ENCODE measurements at regions of chr14 and their contacts with region 1.

Region 1: GRCh38 chr14:77707724-77708408 is at the starts of genes ALKBH1 and SLIRP:
- DNase-seq: peak; percentile 85
- H3K4me3 ChIP-seq: peak within 1 kb of the TSS; percentile 44 to 98 (median 98)
- H3K27ac ChIP-seq: peak within 1 kb of the TSS; percentile 19
- H3K4me1 ChIP-seq: peaks cover 21% of the 10 kb centered on the region
- H3K27me3 ChIP-seq: no peaks in the 10 kb centered on the region
- CTCF ChIP-seq: no peak
- POLR2A ChIP-seq: peak; percentile 94
- total RNA-seq, gene ALKBH1: 13.1 and 14.8 TPM in 2 replicates
- total RNA-seq, gene SLIRP: 160 and 177 TPM in 2 replicates

Region 2: DNA sequence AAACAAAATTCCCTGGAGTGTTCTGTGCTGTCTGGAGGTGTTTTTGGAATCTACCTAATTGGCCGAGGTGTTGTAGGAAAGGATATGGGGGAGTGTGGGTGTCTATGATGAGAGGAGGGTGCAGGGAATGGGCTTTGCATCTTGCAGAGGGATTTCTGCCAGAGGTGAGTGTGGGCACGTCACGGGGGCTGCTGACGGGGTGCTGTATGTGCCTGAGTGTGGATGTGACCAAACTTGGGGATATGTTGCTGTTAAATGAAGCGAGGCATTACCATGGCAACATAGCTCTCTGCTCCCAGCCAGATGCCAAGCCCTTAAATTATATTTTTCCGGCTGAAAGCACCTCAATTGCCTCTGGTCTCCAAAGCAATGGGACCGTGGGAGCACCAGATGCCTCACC is 47.1 kb before region 1 on chr14:
- CTCF ChIA-PET with region 1: no interaction called
- POLR2A ChIA-PET with region 1: no interaction called
- dilution Hi-C with region 1: no loop called
- intact Hi-C with region 1: loop called (anchors 1 kb)
- DNase-seq: no peak
- H3K4me3 ChIP-seq: no peak overlapping the region
- H3K27ac ChIP-seq: no peak overlapping the region
- H3K4me1 ChIP-seq: peaks cover 12% of the 10 kb centered on the region
- H3K27me3 ChIP-seq: no peaks in the 10 kb centered on the region
- CTCF ChIP-seq: no peak
- POLR2A ChIP-seq: no peak

Measured in endothelial cell of umbilical vein (primary cell).